OCI-LY7 (cell line): ENCODE measurements at regions of chr2 and their contacts with region 1.

Region 1: DNA sequence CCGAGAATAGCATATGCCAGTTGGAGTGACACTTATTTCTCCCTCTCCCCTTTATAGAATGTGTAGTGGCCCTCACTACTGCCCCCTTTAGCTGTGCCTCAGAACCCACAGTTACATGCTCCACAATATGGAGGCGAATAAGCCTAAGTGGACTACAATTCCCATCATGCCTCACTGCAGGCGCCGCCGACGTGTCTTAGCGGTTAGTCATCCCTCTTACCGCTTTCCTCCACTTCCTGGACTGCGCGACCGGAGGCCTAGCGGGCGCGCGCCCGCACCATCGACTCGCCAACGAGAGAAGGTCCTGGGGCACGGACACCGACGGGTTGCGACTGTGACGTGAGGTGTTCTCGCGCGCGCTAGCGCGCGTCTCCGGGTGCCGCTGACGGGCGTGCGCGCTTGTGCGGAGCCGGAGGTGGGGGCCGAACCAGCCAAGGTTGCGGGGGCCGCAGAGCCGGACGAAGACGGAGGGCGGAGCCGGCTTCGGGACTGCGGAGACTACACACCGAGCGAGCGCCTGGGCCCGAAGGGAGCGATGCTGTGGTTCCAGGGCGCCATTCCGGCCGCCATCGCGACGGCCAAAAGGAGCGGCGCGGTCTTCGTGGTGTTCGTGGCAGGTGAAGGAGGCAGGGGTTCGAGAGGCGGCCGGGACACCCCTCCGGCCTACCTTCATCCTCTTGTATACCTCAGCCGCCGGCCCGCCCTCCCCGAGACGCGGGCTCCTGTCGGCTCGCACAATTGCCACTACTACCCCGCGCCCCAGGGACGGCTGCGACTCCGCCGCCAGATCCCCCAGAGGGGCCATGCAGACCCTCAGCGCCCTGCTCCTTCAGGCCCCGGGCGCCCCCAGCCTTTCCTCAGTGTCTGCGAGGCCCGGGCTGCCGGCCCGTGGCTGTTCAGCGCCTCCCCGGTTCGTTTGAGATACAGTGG is at the start of gene UBXN4:
- DNase-seq: peak; percentile 99
- H3K4me3 ChIP-seq: peak within 1 kb of the TSS; percentile 91
- H3K27ac ChIP-seq: peak within 1 kb of the TSS; percentile 78
- H3K4me1 ChIP-seq: peaks cover 17% of the 10 kb centered on the region
- CTCF ChIP-seq: peak; percentile 84
- total RNA-seq, gene UBXN4: 48.4 and 55.4 TPM in 2 replicates

Region 2: DNA sequence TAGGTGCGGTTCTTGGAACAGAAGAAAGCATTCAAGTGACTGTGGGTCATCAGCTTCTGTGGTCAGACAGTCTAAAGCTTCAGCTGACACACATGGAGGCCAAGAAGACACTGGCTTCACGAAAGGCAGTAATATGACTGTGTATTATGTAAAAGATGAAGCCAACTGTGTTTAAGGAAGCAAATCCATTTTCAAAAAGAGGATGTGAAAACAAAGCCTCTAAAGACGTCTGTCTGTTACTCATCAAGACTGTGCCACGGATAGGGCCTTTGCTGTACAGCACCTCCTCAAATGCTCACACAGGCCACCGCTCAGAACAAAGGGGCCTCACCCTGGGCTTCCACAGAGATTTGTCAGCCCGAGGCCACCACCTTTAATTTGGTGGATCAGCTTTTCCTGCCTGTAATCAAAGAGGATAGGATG is 1001.8 kb before region 1 on chr2:
- CTCF ChIA-PET with region 1: no interaction called
- POLR2A ChIA-PET with region 1: no interaction called
- intact Hi-C with region 1: loop called (anchors 5 kb)
- DNase-seq: peak; percentile 95
- H3K4me3 ChIP-seq: peak overlapping the region; percentile 46
- H3K27ac ChIP-seq: peak overlapping the region; percentile 93
- H3K4me1 ChIP-seq: peaks cover 63% of the 10 kb centered on the region
- CTCF ChIP-seq: no peak

Region 3: DNA sequence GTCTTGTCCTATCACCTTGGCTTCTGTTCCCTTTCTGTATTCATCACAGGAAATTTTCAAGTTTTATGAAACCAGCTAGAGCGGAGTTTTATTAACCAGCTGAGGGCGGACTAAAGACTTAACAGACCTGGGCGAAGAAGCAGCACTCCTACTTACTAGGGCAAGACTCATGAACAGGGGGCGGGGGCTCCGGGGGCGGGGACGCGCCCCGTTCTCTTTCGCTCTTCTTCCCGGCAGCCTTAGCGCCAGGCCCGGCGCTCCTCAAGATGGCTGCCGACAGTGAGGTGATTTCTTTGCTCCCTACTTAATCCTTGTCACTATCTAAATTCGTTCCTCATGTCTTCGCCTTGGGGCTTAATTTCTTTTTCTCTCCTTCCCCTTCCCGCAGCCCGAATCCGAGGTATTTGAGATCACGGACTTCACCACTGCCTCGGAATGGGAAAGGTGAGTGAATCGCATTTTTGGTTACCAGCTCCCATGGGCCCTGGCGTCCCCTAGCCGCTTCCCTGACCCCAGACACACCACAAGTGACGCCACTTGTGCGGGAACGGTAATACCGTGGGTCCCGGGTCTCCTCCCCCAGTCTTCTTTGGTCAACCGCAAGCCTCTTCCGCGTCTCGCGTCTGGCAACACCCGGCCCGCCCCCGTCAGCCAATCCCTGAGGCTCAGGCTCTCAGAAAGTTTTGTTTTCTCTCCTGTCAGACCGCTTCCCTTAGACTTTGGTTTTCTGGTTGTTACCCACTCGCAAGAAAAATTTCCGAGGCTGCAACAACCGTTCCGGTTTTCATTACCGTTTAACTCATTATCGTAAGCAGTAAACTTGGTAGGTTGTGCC is 689.4 kb before region 1 on chr2 and contains the start of gene RAB3GAP1:
- CTCF ChIA-PET with region 1: no interaction called
- POLR2A ChIA-PET with region 1: interaction called, 3 read pairs
- intact Hi-C with region 1: loop called (anchors 5 kb)
- DNase-seq: peak; percentile 86
- H3K4me3 ChIP-seq: peak within 1 kb of the TSS; percentile 92
- H3K27ac ChIP-seq: peak within 1 kb of the TSS; percentile 89
- H3K4me1 ChIP-seq: peaks cover 37% of the 10 kb centered on the region
- CTCF ChIP-seq: no peak; the same call in 1 of the 2 replicates
- total RNA-seq, gene RAB3GAP1: 40.2 and 49.2 TPM in 2 replicates

Region 4: GRCh38 chr2:135657806-135658582 is 83.7 kb before region 1 on chr2:
- CTCF ChIA-PET with region 1: no interaction called
- POLR2A ChIA-PET with region 1: no interaction called
- intact Hi-C with region 1: no loop called
- DNase-seq: no peak
- H3K4me3 ChIP-seq: no peak overlapping the region
- H3K27ac ChIP-seq: no peak overlapping the region
- H3K4me1 ChIP-seq: no peaks in the 10 kb centered on the region
- CTCF ChIP-seq: no peak

Region 5: GRCh38 chr2:135755573-135755972 is 13.9 kb after region 1 on chr2:
- CTCF ChIA-PET with region 1: no interaction called
- POLR2A ChIA-PET with region 1: interaction called, 14 read pairs
- intact Hi-C with region 1: no loop called
- DNase-seq: no peak
- H3K4me3 ChIP-seq: no peak overlapping the region
- H3K27ac ChIP-seq: no peak overlapping the region
- H3K4me1 ChIP-seq: no peaks in the 10 kb centered on the region
- CTCF ChIP-seq: no peak

Region 6: GRCh38 chr2:135870571-135870970 is 128.9 kb after region 1 on chr2:
- CTCF ChIA-PET with region 1: no interaction called
- POLR2A ChIA-PET with region 1: no interaction called
- intact Hi-C with region 1: no loop called
- DNase-seq: no peak
- H3K4me3 ChIP-seq: no peak overlapping the region
- H3K27ac ChIP-seq: no peak overlapping the region
- H3K4me1 ChIP-seq: peaks cover 22% of the 10 kb centered on the region
- CTCF ChIP-seq: no peak

Region 7: DNA sequence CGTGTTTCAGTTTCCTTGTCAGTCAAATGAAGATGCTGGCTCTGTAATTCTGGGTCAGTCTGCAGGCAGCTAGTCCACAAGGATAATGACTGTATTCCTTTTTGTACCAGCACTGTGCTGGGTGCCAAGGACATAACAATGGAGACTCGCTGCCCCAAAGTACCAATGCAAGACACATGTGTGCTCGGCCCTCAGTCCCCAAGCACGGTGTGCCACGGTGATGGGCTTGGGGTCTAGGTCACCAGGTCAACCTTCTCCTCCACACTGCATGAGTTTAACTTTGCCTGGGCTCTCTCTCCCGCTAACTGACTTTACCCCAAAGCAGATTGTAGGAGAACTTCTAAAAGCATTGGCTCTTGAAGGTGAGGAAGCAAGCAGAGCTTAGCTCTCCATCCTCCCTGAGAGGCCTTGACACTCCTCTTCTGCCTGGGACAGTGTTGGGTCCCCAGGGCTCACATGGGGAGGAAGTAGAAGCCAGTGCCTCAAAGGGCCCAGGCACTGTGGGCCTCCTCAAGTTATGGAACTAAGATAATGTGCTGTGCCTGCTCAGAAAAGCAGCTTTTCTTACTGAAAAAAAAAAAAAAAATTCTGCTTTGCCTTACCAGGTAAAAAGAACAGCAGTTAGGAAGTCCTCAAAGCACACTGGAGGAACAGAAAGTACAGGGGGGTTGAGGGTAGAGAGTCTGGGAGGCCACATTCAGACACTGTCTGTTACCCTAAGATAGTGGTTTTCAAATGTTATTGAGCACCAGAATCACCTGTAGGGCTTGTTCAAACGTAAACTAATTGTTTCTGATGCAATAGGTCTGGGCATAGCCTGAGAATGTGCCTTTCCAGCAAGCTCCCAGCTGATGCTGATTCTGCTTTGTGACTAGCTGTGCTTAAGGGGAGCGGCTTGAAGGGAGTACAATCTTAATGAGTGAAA is 652.7 kb after region 1 on chr2:
- CTCF ChIA-PET with region 1: no interaction called
- POLR2A ChIA-PET with region 1: no interaction called
- intact Hi-C with region 1: loop called (anchors 5 kb)
- DNase-seq: peak; percentile 89
- H3K4me3 ChIP-seq: peak overlapping the region; percentile 11
- H3K27ac ChIP-seq: peak overlapping the region; percentile 98
- H3K4me1 ChIP-seq: peaks cover 94% of the 10 kb centered on the region
- CTCF ChIP-seq: no peak